H1 (cell line): ENCODE measurements at regions of chr19 and their contacts with region 1.

Region 1: DNA sequence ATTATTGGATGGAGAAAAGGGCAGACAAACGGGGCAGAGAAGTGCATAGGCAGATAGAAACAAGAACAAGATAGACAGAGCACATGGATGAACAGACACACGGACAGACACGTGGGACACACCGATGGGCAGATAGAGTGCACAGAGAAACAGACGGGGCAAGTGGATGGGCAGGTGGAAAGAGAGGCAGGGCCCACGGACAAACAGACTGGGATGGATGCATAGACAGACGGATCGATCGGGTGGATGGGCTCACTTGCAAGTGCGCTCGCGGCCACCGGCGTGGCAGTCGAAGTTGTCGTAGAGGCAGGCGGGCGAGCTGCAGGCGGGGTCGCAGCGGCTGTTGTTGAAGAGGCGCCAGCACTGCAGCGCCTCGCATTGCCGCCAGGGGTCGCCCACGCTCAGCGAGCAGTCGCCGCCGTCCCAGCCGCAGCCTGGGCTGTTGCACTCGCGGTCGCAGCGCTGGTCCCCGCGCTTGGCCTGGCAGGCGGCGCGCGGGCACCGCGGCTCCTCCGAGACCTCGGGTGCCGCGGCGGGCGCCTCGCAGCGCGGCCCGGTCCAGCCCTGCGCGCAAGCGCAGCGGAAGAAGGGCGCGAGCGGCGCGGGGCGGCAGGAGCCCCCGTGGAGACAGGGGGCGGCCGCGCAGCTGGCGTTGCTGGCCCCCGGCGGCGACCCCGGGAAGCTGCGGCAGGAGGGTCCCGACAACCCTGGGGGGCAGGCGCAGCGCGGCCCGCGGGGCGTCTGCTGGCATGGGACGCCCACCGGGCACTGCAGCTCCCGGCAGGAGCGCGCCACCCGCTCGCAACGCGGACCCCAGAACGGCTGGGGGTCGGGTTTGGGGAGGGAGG is 23.3 kb downstream of the NOTCH3 start:
- DNase-seq: peak; percentile 72 to 95
- H3K4me3 ChIP-seq: peak overlapping the region in 3 of 4 experiments; percentile 11 to 57 (median 14); a peak in 3 of 8 replicates
- H3K27ac ChIP-seq: no peak overlapping the region
- H3K4me1 ChIP-seq: peaks cover 0 to 10% (median 2%) of the 10 kb centered on the region in 4 experiments; a peak in 5 of 7 replicates
- H3K27me3 ChIP-seq: no peaks in the 10 kb centered on the region; a peak in 1 of 7 replicates
- CTCF ChIP-seq: peak; percentile 86 to 94 (median 91)
- EP300 ChIP-seq: no peak
- POLR2A ChIP-seq: no peak
- RAD21 ChIP-seq: peak; percentile 72 to 80

Region 2: GRCh38 chr19:15022752-15023151 is 154.7 kb before region 1 on chr19:
- CTCF ChIA-PET with region 1: no interaction called
- POLR2A ChIA-PET with region 1: no interaction called
- DNase-seq: no peak
- H3K4me3 ChIP-seq: no peak overlapping the region
- H3K27ac ChIP-seq: no peak overlapping the region
- H3K4me1 ChIP-seq: no peaks in the 10 kb centered on the region
- H3K27me3 ChIP-seq: no peaks in the 10 kb centered on the region; a peak in 1 of 7 replicates
- CTCF ChIP-seq: no peak
- EP300 ChIP-seq: no peak
- POLR2A ChIP-seq: no peak
- RAD21 ChIP-seq: no peak

Region 3: DNA sequence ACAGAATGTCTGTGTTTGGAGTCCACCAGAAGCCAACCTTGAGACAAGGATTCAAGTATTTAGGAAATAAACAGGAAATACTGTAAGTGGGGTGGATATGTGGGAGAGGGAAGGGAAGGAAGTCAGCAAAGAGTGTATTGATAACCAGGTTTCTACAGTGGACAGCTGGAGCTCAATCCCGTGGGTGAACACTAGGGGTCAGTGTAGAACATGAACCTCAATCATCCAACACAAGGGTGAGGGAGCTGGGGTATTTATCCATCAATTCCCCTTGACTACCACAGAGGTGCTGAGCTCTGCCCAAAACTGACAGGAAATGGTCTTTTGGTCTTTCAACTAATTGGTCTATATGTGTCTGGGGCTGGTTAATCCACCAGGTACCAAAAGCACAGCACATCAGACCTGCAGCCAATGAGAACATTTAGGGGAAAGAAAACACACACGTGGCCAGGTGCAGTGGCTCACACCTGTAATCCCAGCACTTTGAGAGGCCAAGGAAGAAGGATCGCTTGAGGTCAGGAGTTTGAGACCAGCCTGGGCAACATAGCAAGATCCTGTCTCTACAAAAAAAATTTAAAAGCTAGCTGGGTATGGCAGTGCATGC is 75.9 kb before region 1 on chr19:
- CTCF ChIA-PET with region 1: interaction called, 10 read pairs
- POLR2A ChIA-PET with region 1: no interaction called
- DNase-seq: peak in 1 of 2 experiments; percentile 87
- H3K4me3 ChIP-seq: no peak overlapping the region
- H3K27ac ChIP-seq: no peak overlapping the region
- H3K4me1 ChIP-seq: no peaks in the 10 kb centered on the region
- H3K27me3 ChIP-seq: no peaks in the 10 kb centered on the region
- CTCF ChIP-seq: peak; percentile 56 to 87 (median 74)
- EP300 ChIP-seq: no peak
- POLR2A ChIP-seq: no peak
- RAD21 ChIP-seq: peak; percentile 67 to 68

Region 4: GRCh38 chr19:15222738-15223648 is 45.5 kb after region 1 on chr19:
- CTCF ChIA-PET with region 1: interaction called, 10 read pairs
- POLR2A ChIA-PET with region 1: interaction called, 5 read pairs
- DNase-seq: peak; percentile 90 to 92
- H3K4me3 ChIP-seq: peak overlapping the region; percentile 62 to 74 (median 62)
- H3K27ac ChIP-seq: peak overlapping the region; percentile 60
- H3K4me1 ChIP-seq: peaks cover 0 to 3% (median 1%) of the 10 kb centered on the region in 4 experiments; a peak in 4 of 7 replicates
- H3K27me3 ChIP-seq: no peaks in the 10 kb centered on the region
- CTCF ChIP-seq: peak in 1 of 3 experiments; percentile 7; a peak in 1 of 4 replicates
- EP300 ChIP-seq: no peak
- POLR2A ChIP-seq: no peak; a peak in 2 of 3 replicates
- RAD21 ChIP-seq: peak in 1 of 2 experiments; percentile 24; a peak in 3 of 4 replicates

Region 5: DNA sequence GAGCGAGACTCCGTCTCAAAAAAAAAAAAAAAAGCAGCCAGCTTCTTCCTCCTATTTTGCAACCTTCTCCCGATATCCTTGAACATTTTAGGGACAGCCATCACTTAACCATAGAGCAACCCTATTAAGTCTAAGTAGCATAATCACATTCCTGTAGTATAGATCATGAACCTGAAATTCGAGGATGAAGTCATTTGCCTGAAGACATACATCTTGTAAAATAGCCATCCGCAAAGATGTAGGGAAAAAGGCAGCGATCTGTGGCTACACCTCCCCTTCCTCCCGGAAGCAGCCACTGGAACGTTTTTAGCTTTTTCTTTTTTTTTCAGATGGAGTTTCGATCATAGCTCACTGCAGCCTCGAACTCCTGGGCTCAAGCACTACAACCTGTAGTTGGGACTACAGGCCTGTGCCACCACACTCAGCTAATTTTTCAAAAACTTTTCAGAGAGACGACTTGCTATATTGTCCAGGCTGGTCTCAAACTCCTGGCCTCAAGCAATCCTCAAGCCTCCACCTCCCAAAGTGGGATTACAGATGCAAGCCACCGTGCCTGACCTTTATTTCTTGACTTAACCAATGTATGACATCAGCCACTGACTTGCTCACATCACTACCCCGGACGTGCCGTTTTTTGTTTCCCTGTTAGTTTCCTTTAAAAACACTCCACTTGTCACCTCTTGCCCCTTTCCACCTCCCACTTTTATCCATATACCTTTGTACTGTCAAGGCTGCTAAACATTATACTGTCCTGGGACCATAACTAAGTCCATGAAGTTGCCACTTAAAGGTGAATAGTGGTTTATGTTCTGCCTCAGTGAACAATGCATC is 56.8 kb after region 1 on chr19:
- CTCF ChIA-PET with region 1: interaction called, 10 read pairs
- POLR2A ChIA-PET with region 1: interaction called, 12 read pairs
- DNase-seq: no peak
- H3K4me3 ChIP-seq: no peak overlapping the region
- H3K27ac ChIP-seq: no peak overlapping the region
- H3K4me1 ChIP-seq: peaks cover 2 to 9% (median 5%) of the 10 kb centered on the region in 4 experiments; a peak in 6 of 7 replicates
- H3K27me3 ChIP-seq: no peaks in the 10 kb centered on the region
- CTCF ChIP-seq: no peak
- EP300 ChIP-seq: no peak
- POLR2A ChIP-seq: peak in 1 of 2 experiments; percentile 32; a peak in 1 of 3 replicates
- RAD21 ChIP-seq: no peak

Region 6: GRCh38 chr19:15251749-15252397 is 74.4 kb after region 1 on chr19:
- CTCF ChIA-PET with region 1: interaction called, 22 read pairs
- POLR2A ChIA-PET with region 1: interaction called, 3 read pairs
- DNase-seq: peak; percentile 46 to 84
- H3K4me3 ChIP-seq: no peak overlapping the region; a peak in 2 of 8 replicates
- H3K27ac ChIP-seq: no peak overlapping the region
- H3K4me1 ChIP-seq: peaks cover 0 to 15% (median 4%) of the 10 kb centered on the region in 4 experiments; a peak in 5 of 7 replicates
- H3K27me3 ChIP-seq: no peaks in the 10 kb centered on the region
- CTCF ChIP-seq: peak; percentile 67 to 71 (median 71)
- EP300 ChIP-seq: no peak
- POLR2A ChIP-seq: no peak
- RAD21 ChIP-seq: peak; percentile 38 to 52